Mucosa of descending colon (tissue), 3 donors: ENCODE measurements at regions of chr9 and their contacts with region 1.

Region 1: GRCh38 chr9:7382304-7382703 is 417.3 kb downstream of the DMAC1 start:
- DNase-seq: no peak
- ATAC-seq: no peak
- H3K4me3 ChIP-seq: no peak overlapping the region
- H3K4me1 ChIP-seq: no peaks in the 10 kb centered on the region
- CTCF ChIP-seq: no peak

Region 2: DNA sequence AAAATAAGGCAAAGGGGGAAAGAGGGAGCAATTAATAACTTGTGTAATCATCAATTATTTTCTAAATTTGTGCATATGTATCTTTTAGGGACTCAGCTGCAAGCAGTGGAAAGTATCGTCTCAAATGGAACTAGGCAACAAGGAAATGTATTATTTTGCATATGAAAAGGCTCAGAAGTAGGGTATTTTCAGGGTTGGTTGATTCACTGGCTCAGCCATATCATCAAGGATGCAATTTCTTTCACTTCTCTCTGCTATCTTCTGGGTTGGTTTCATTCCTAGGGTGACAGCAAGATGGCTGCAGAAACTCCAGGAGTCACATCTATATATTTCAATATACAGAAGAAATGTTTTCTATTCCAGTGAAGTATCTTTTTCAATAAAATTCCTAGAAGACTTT is 92.5 kb before region 1 on chr9:
- intact Hi-C with region 1: loop called in 1 of 2 experiments (anchors 5 kb)
- DNase-seq: no peak
- ATAC-seq: no peak
- H3K4me3 ChIP-seq: no peak overlapping the region
- H3K4me1 ChIP-seq: no peaks in the 10 kb centered on the region
- CTCF ChIP-seq: no peak

Region 3: DNA sequence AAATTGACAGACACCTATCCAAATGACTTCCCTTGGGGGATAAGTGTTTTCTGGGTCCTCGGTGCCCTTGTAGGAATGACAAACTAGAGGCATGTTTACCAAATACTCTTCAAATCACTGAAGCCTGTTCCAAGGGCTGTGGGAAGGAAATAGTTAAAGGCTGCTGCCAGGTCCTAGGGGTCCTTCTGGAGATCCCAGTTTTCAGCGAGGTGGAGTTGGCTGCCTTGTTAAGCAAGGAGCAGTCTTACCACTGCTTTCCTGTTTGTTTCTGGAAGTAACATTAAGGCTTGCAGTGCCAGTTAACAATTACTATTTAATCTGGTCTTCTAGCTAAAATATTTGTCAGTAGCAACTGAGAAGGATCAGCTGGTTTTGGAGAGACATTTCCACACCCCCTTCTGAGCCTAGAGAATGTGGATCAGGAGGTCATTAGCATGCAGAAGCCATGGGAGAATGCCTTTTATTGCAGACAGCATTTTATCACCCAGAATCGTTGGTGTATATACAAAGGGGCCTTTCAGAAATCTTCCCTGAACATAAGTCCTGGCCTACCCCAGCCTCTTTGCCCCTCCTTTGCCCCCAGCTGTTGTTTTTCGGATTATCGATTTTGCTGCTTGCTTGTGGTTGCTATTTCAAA is 178.5 kb after region 1 on chr9:
- intact Hi-C with region 1: no loop called
- DNase-seq: no peak
- ATAC-seq: no peak
- H3K4me3 ChIP-seq: no peak overlapping the region
- H3K4me1 ChIP-seq: no peaks in the 10 kb centered on the region
- CTCF ChIP-seq: no peak